ENCODE measurements at regions of chr2 and their contacts with region 1.

Region 1: DNA sequence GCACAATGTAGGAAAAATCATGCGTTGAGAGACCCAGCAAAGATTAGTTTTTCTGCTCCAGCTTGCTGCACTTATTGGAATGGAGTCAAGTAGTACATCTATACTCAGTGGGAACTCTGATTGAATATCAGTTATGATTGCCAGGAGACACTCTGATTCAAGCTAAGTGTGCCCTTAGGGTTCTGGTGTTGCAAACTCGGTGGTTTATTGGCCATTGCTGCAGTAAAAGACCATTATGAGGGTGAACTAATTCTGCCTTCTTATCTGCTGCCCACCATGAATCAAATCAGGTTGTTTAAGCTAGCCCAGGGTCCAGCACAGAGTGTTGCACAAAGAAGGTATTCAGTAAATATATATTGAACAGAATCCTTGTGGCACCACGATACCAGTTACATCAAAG is 74.8 kb upstream of the GLS start:
- DNase-seq: no peak
- ATAC-seq: no peak
- H3K4me3 ChIP-seq: no peak overlapping the region
- H3K4me3 Mint-ChIP-seq: no peak overlapping the region
- H3K27ac ChIP-seq: no peak overlapping the region
- H3K27ac Mint-ChIP-seq: no peak overlapping the region
- H3K4me1 ChIP-seq: no peaks in the 10 kb centered on the region
- H3K4me1 Mint-ChIP-seq: no peaks in the 10 kb centered on the region
- H3K27me3 ChIP-seq: no peaks in the 10 kb centered on the region
- H3K27me3 Mint-ChIP-seq: peaks cover 0 to 1% of the 10 kb centered on the region in 2 donors

Region 2: DNA sequence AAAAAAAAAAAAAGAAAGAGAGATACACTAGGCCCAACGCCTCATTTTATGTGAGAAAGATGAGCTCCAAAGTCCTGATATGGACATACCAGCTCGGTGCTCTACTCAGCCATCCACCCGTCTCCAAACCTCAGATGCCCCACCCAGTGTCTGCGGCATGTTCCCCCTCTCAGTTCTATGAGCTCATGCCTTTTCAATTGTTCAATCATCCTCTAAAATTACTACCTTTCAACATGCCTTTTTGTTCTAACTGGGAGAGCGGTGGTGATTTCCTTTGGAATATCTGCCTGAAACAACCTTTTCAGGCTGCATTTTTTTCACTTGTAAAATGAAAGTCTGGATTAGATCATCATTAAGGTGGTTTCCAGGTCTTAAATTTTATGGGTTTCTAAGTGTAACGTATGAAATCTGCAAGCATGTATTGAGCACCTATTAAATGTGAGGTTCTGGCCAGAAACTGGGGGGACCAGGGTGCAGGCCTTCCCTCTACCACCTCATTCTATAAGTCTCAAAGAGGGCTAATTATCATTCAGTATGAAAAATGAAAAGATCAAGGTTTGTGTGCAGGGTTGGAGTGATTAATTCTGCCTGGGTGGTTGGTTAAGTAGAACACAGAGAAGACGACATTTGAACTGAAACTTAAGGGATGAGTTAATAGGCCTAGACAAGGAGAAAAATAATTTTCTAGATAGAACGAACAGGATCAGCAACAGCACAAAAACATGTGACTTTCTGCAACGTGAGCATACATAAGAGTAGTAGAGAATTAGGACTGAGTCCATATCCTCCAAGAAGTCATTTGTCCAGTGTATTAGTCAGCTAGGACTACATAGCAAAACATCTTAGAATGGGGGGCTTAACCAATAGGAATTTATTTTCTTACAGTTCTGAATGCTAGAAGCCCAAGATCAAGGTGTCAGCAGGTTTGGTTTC is 12.6 kb before region 1 on chr2:
- CTCF ChIA-PET with region 1: interaction called in 1 of 2 experiments, 12 read pairs
- POLR2A ChIA-PET with region 1: no interaction called
- DNase-seq: peak in 1 of 35 experiments; percentile 0
- ATAC-seq: peak in 1 of 4 experiments; percentile 32
- H3K4me3 ChIP-seq: no peak overlapping the region
- H3K4me3 Mint-ChIP-seq: no peak overlapping the region
- H3K27ac ChIP-seq: no peak overlapping the region
- H3K27ac Mint-ChIP-seq: no peak overlapping the region
- H3K4me1 ChIP-seq: no peaks in the 10 kb centered on the region
- H3K4me1 Mint-ChIP-seq: peaks cover 7 to 10% (median 7%) of the 10 kb centered on the region in 3 donors
- H3K27me3 ChIP-seq: no peaks in the 10 kb centered on the region
- H3K27me3 Mint-ChIP-seq: no peaks in the 10 kb centered on the region

Region 3: GRCh38 chr2:190827720-190828119 is 21.9 kb after region 1 on chr2:
- CTCF ChIA-PET with region 1: no interaction called
- POLR2A ChIA-PET with region 1: no interaction called
- DNase-seq: no peak
- ATAC-seq: no peak
- H3K4me3 ChIP-seq: no peak overlapping the region
- H3K4me3 Mint-ChIP-seq: no peak overlapping the region
- H3K27ac ChIP-seq: no peak overlapping the region
- H3K27ac Mint-ChIP-seq: no peak overlapping the region
- H3K4me1 ChIP-seq: no peaks in the 10 kb centered on the region
- H3K4me1 Mint-ChIP-seq: no peaks in the 10 kb centered on the region
- H3K27me3 ChIP-seq: no peaks in the 10 kb centered on the region
- H3K27me3 Mint-ChIP-seq: no peaks in the 10 kb centered on the region

Region 4: DNA sequence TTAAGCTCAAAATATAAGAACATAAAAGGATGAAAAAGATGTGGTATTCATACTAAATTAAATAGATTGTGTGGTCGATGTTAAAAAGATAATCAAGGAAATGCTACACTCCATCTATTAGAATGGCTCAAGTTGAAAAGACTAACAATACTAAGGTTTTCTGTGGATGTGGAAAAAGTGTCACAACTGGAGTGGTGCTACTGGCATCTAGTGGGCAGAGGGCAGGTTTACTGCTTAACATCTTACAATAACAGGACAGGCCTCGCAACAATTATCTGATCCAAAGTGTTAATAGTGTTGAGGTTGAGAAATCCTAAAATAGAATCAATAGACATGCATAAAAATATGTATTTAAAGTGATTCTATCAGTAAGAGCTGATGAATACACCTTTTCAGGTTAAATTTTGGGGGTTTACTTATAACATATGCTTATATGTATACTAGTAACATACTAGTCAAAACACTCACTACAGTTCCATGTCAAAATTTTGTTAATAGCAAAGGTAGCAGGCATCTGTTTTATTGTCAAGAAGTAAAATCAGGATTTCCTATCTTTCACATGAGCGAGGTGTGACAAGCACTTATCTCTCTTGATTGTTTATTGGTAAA is 1480.4 kb after region 1 on chr2:
- CTCF ChIA-PET with region 1: no interaction called
- POLR2A ChIA-PET with region 1: no interaction called
- DNase-seq: peak in 1 of 35 experiments; percentile 1
- ATAC-seq: no peak
- H3K4me3 ChIP-seq: no peak overlapping the region
- H3K4me3 Mint-ChIP-seq: no peak overlapping the region
- H3K27ac ChIP-seq: no peak overlapping the region
- H3K27ac Mint-ChIP-seq: no peak overlapping the region
- H3K4me1 ChIP-seq: no peaks in the 10 kb centered on the region
- H3K4me1 Mint-ChIP-seq: no peaks in the 10 kb centered on the region
- H3K27me3 ChIP-seq: no peaks in the 10 kb centered on the region
- H3K27me3 Mint-ChIP-seq: peaks cover 0 to 2% of the 10 kb centered on the region in 2 donors

Measured in T-cell (primary cell).